Activated naive CD4-positive, alpha-beta T cell treated with anti-CD3 and anti-CD28 coated beads for 36 hours (primary cell): ENCODE measurements at regions of chr12 and their contacts with region 1.

Region 1: DNA sequence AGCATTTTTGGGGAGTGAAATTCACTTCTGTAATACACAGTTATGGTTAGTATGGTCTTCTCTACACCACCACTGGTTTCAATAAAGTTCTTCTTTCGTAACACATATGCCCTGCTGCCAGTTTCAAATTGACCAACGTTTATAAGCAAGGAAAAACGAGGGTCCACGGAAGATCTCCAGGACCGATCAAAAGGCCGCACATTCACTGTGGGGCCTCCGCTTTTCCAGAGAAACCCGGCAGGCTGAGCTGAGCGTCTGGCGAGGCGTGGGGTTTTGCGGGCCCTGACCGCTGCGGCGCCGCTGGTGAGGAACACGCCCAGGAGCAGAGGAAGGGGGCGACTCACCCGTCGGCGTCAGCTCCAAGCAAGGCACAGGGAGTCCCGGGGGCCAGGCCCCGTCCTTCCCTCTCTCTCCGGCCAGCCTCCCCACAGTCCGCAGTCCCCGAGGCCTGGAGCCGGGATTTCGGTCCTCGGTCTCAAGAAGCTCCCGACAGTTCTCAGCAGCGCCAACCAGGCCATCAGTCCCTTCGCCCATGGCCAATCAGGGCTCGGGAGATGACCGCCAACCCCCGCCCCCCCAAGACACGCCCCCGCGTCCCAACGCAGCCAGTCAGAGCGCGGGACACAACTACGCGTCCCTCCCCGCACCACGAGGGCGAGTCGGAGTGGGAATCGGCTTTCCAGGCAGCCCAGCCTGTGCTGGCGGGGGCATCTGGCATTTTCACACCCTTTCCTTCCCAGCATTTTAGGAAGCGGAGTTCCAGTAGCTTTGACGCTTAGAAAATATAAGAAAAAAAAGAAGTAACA is at the start of gene MTERF2:
- DNase-seq: peak; percentile 88
- H3K4me3 Mint-ChIP-seq: peak within 1 kb of the TSS; percentile 90
- H3K27ac Mint-ChIP-seq: peak within 1 kb of the TSS; percentile 70
- H3K4me1 Mint-ChIP-seq: peaks cover 36% of the 10 kb centered on the region
- H3K27me3 Mint-ChIP-seq: no peaks in the 10 kb centered on the region
- total RNA-seq, gene MTERF2: 5.2 to 6.5 TPM

Region 2: GRCh38 chr12:107027636-107028053 is 40.8 kb after region 1 on chr12:
- CTCF ChIA-PET with region 1: no interaction called
- intact Hi-C with region 1: loop called (anchors 2 kb)
- DNase-seq: peak; percentile 7
- H3K4me3 Mint-ChIP-seq: no peak overlapping the region
- H3K27ac Mint-ChIP-seq: peak overlapping the region; percentile 24
- H3K4me1 Mint-ChIP-seq: peaks cover 20% of the 10 kb centered on the region
- H3K27me3 Mint-ChIP-seq: no peaks in the 10 kb centered on the region

Region 3: GRCh38 chr12:107079172-107080011 is 92.6 kb after region 1 on chr12:
- CTCF ChIA-PET with region 1: no interaction called
- intact Hi-C with region 1: loop called (anchors 5 kb)
- DNase-seq: peak; percentile 17
- H3K4me3 Mint-ChIP-seq: no peak overlapping the region
- H3K27ac Mint-ChIP-seq: no peak overlapping the region
- H3K4me1 Mint-ChIP-seq: peaks cover 14% of the 10 kb centered on the region
- H3K27me3 Mint-ChIP-seq: no peaks in the 10 kb centered on the region